PC-3 (cell line): ENCODE measurements at regions of chr2 and their contacts with region 1.

Region 1: DNA sequence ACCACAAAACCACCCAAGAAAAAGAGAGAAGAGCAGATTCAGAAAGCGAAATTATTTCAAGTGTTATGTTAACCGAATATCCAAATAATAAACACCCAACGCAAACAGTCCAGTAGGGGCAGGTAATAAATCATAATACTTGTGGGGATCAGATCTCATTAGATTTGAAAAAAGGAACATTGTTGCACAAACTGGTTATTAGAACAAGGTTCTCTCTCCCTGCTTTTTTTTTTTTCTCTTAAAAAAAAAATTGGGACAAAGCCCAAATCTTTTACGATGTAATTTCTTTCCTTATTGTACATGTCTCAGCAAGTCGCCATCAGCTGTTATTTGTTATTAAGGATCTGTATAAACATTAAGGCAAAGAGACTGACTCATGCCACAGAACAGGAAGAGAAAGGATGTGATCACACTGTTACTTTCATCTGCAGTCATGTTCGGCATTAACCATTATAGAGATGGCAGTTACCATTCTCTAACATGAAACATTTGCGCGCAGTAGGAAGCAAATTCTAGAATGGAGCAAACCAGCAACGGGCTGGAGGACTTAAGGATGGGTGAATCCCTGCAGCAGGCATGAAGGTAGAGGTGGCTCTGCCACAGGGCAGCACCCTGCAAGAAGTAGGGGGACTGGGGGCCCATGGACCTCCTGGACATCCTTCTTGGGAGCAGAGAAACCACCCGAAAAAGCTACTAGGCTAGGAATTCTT is 42.0 kb downstream of the EPHA4 start:
- DNase-seq: peak; percentile 82
- ATAC-seq: peak; percentile 93
- H3K4me3 ChIP-seq: peak overlapping the region; percentile 46
- H3K27ac ChIP-seq: 0 out of 2 replicates have a peak overlapping the region, but pooled peaks have one; percentile 26
- H3K4me1 ChIP-seq: peaks cover 18% of the 10 kb centered on the region
- H3K27me3 ChIP-seq: no peaks in the 10 kb centered on the region
- CTCF ChIP-seq: no peak

Region 2: GRCh38 chr2:220966636-220967035 is 563.5 kb before region 1 on chr2:
- CTCF ChIA-PET with region 1: no interaction called
- POLR2A ChIA-PET with region 1: no interaction called
- intact Hi-C with region 1: no loop called
- DNase-seq: peak; percentile 78
- ATAC-seq: peak; percentile 69
- H3K4me3 ChIP-seq: no peak overlapping the region
- H3K27ac ChIP-seq: no peak overlapping the region
- H3K4me1 ChIP-seq: peaks cover 17% of the 10 kb centered on the region
- H3K27me3 ChIP-seq: no peaks in the 10 kb centered on the region
- CTCF ChIP-seq: no peak

Region 3: GRCh38 chr2:221503965-221504364 is 26.1 kb before region 1 on chr2:
- CTCF ChIA-PET with region 1: no interaction called
- POLR2A ChIA-PET with region 1: no interaction called
- intact Hi-C with region 1: no loop called
- DNase-seq: no peak
- ATAC-seq: no peak
- H3K4me3 ChIP-seq: no peak overlapping the region
- H3K27ac ChIP-seq: no peak overlapping the region
- H3K4me1 ChIP-seq: no peaks in the 10 kb centered on the region
- H3K27me3 ChIP-seq: no peaks in the 10 kb centered on the region
- CTCF ChIP-seq: no peak

Region 4: DNA sequence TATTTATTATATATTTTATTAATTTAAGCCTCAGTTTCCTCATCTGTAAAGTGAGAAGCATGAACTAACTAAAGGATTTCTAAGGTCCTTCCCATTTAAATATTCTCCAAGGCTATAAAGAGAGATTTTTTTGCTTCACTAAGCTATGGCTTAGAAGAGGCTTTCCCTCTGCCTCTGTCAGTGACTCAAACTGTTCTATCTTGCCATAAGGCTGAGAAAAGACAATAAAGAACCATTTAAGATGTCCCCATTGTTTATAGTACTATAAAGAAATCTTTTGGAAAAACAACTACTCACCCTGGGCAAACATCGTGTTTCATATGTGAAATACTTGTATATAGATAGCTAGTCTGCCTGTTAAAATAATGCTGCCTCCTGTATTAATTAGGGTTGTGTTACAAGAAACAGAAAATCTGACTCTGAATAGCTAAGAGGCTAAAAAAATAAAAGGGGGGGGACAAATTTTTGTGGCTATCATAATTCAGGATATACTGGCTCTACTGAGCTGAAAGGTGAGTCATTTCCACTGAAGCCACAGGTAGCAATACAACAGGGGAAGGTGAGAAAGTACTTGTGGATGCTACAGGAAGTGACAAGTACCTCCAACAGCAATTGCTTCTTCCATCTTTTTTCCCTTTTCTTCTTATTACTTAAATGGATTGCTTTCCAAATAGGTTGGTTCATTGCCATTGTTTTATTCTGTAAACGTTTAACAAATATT is 16.6 kb after region 1 on chr2:
- CTCF ChIA-PET with region 1: no interaction called
- POLR2A ChIA-PET with region 1: no interaction called
- intact Hi-C with region 1: loop called (anchors 2 kb)
- DNase-seq: peak; percentile 70
- ATAC-seq: peak; percentile 90
- H3K4me3 ChIP-seq: no peak overlapping the region
- H3K27ac ChIP-seq: peak overlapping the region; percentile 34; the same call in 1 of the 2 replicates
- H3K4me1 ChIP-seq: peaks cover 13% of the 10 kb centered on the region
- H3K27me3 ChIP-seq: no peaks in the 10 kb centered on the region
- CTCF ChIP-seq: no peak

Region 5: GRCh38 chr2:221629468-221629867 is 99.4 kb after region 1 on chr2:
- CTCF ChIA-PET with region 1: no interaction called
- POLR2A ChIA-PET with region 1: no interaction called
- intact Hi-C with region 1: no loop called
- DNase-seq: peak; percentile 67
- ATAC-seq: peak; percentile 45
- H3K4me3 ChIP-seq: no peak overlapping the region
- H3K27ac ChIP-seq: no peak overlapping the region
- H3K4me1 ChIP-seq: peaks cover 10% of the 10 kb centered on the region; the same call in 1 of the 2 replicates
- H3K27me3 ChIP-seq: no peaks in the 10 kb centered on the region
- CTCF ChIP-seq: no peak

Region 6: DNA sequence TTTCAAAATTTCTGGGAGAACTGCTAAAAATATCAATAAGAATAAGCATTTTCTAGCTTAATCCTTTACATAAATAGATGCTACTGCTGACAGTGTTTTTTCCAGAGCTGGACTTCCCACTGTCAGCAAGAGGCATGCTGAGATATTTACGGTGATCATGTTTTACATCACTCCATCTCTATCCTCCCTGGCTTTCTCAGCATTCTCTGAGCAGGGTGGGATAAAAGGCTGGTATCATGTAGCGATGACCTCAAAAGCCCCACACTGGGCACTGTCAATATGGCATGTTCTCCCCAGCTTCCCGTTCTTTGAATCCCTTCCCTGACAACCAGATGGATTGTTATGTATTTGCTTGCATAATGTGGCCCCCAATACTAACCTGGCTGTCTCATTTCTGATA is 125.2 kb after region 1 on chr2:
- CTCF ChIA-PET with region 1: no interaction called
- POLR2A ChIA-PET with region 1: no interaction called
- intact Hi-C with region 1: no loop called
- DNase-seq: no peak
- ATAC-seq: no peak
- H3K4me3 ChIP-seq: no peak overlapping the region
- H3K27ac ChIP-seq: no peak overlapping the region
- H3K4me1 ChIP-seq: no peaks in the 10 kb centered on the region
- H3K27me3 ChIP-seq: no peaks in the 10 kb centered on the region
- CTCF ChIP-seq: no peak